ENCODE measurements at regions of chr5 and their contacts with region 1.

Region 1: GRCh38 chr5:134225618-134226440 is at the start of gene PPP2CA:
- DNase-seq: peak; percentile 99
- H3K4me3 Mint-ChIP-seq: peak within 1 kb of the TSS; percentile 96
- H3K27ac Mint-ChIP-seq: peak within 1 kb of the TSS; percentile 96
- H3K4me1 Mint-ChIP-seq: peaks cover 52% of the 10 kb centered on the region
- H3K27me3 Mint-ChIP-seq: no peaks in the 10 kb centered on the region
- total RNA-seq, gene PPP2CA: 132 to 135 TPM

Region 2: DNA sequence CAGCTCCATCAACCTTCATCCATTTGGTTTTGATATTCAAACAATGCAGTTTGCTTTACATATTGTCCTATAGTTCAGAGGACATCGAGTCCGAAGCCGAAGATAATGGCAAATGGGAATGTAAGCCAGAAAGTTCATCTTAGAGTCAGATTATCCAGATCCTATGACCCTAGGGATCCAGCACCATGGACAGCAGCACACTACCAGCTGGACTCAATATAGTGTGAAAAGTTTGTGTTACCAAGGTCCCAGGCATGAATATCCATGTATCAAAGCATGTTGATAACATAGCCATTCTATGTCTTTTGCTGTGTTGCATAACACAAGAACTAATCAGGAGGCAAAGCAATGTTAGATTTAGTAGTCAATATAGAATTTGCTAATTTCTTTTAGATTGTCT is 659.8 kb before region 1 on chr5:
- CTCF ChIA-PET with region 1: no interaction called
- intact Hi-C with region 1: no loop called
- DNase-seq: peak; percentile 62
- H3K4me3 Mint-ChIP-seq: no peak overlapping the region
- H3K27ac Mint-ChIP-seq: no peak overlapping the region
- H3K4me1 Mint-ChIP-seq: no peaks in the 10 kb centered on the region
- H3K27me3 Mint-ChIP-seq: peaks cover 22% of the 10 kb centered on the region

Region 3: GRCh38 chr5:133698646-133699526 is 526.9 kb before region 1 on chr5:
- CTCF ChIA-PET with region 1: no interaction called
- intact Hi-C with region 1: loop called (anchors 1 kb)
- DNase-seq: peak; percentile 73
- H3K4me3 Mint-ChIP-seq: no peak overlapping the region
- H3K27ac Mint-ChIP-seq: peak overlapping the region; percentile 59
- H3K4me1 Mint-ChIP-seq: peaks cover 15% of the 10 kb centered on the region
- H3K27me3 Mint-ChIP-seq: peaks cover 5% of the 10 kb centered on the region

Region 4: DNA sequence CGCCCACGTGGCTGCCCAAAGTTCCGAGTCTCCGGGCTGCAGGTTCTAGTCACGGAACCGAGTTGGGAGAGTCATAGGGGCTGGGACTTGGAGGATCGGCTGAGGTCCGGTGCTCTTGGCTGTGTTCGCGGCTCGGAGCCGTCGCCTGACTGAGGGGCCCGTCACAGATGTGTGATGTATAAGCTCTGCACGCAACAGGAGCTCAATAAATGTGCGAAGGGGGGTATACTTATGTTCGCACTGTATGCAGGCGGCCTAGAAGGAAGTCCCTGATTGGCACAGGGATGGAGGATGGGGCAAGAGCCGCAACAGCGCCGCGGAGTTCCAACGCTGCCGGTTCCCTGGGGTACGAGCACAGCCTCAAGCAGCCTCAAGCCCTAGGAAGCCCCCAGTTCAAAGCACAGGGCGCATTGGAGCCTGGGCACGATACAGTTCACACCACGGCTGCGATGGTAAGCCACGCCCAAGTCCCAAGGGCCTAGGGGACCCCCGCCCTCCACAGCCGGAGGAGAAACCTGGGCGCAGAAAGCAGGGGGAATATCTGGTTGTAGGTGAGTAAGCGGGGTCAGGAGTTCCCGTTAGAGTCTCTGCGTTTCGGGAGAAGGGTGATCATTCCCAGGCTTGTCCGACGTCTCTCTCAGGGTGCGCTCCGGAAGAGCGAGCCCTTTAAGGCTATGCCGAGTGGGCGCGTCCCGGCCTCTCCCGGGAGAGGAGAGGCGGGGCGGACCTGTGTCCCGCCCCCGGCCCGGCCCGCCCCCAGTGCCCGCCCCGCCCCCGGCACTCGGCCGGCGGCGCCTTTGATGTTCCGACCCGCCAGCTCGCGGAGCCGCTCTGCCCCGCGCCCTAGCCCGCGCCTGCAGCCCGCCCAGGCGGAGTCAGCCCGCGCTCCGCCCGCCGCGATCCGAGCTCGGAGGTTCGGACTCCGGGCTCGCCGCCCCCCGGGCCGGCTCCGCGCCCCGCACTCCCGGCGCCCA is 111.6 kb before region 1 on chr5 and contains the start of gene TCF7:
- CTCF ChIA-PET with region 1: interaction called, 4 read pairs
- intact Hi-C with region 1: loop called (anchors 5 kb)
- DNase-seq: peak; percentile 81
- H3K4me3 Mint-ChIP-seq: peak within 1 kb of the TSS; percentile 81
- H3K27ac Mint-ChIP-seq: peak within 1 kb of the TSS; percentile 91
- H3K4me1 Mint-ChIP-seq: peaks cover 64% of the 10 kb centered on the region
- H3K27me3 Mint-ChIP-seq: no peaks in the 10 kb centered on the region
- total RNA-seq, gene TCF7: 87.9 to 92.3 TPM

Region 5: GRCh38 chr5:134465816-134466240 is 240.0 kb after region 1 on chr5:
- CTCF ChIA-PET with region 1: no interaction called
- intact Hi-C with region 1: loop called (anchors 1 kb)
- DNase-seq: peak; percentile 73
- H3K4me3 Mint-ChIP-seq: peak overlapping the region; percentile 81
- H3K27ac Mint-ChIP-seq: peak overlapping the region; percentile 81
- H3K4me1 Mint-ChIP-seq: peaks cover 19% of the 10 kb centered on the region
- H3K27me3 Mint-ChIP-seq: no peaks in the 10 kb centered on the region

Region 6: DNA sequence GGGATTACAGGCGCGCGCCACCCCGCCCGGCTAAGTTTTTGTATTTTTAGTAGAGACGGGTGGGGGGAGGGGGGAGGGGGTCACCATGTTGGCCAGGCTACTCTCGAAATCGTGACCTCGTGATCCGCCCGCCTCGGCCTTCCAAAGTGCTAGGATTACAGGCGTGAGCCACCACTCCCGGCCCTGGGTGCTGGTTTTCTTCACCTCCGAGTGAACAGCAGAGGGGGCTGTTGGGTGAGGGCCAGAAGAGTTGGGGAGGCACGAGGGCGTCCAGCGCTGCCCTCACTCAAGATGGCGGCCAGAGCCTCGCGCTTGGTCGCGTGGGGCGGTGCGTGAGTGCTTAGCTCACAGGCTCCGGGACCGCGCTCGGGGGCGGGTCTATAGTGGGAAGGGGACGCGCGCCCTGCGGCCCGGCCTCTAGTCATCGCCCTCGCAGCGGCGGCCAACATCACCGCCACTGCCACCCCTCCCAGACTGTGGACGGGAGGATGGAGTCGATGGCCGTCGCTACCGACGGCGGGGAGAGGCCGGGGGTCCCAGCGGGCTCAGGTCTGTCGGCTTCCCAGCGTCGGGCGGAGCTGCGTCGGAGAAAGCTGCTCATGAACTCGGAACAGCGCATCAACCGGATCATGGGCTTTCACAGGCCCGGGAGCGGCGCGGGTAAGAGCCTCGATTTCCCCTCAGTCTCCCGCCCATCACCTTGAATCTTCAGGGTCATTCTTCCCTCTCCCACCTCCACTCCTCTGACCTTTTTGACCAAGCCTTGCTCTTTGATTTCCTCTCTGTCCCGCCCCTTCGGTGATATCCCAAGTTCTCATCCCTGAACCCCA is 512.5 kb after region 1 on chr5 and contains the start of gene CAMLG:
- CTCF ChIA-PET with region 1: interaction called, 3 read pairs
- intact Hi-C with region 1: loop called (anchors 1 kb)
- DNase-seq: peak; percentile 97
- H3K4me3 Mint-ChIP-seq: peak within 1 kb of the TSS; percentile 81
- H3K27ac Mint-ChIP-seq: peak within 1 kb of the TSS; percentile 88
- H3K4me1 Mint-ChIP-seq: peaks cover 26% of the 10 kb centered on the region
- H3K27me3 Mint-ChIP-seq: no peaks in the 10 kb centered on the region
- total RNA-seq, gene CAMLG: 34.6 to 36.9 TPM

Region 7: GRCh38 chr5:134904630-134905245 is 678.9 kb after region 1 on chr5 and contains the start of gene PCBD2:
- CTCF ChIA-PET with region 1: no interaction called
- intact Hi-C with region 1: loop called (anchors 10 kb)
- DNase-seq: peak; percentile 95
- H3K4me3 Mint-ChIP-seq: peak within 1 kb of the TSS; percentile 98
- H3K27ac Mint-ChIP-seq: peak within 1 kb of the TSS; percentile 99
- H3K4me1 Mint-ChIP-seq: peaks cover 17% of the 10 kb centered on the region
- H3K27me3 Mint-ChIP-seq: no peaks in the 10 kb centered on the region
- total RNA-seq, gene PCBD2: 9.6 to 10.5 TPM

Measured in activated naive CD4-positive, alpha-beta T cell treated with anti-CD3 and anti-CD28 coated beads for 36 hours (primary cell).